Left ventricle myocardium inferior (tissue), 1 donor: ENCODE measurements at regions of chr1 and their contacts with region 1.

Region 1: GRCh38 chr1:112872551-112872962 is 83.4 kb downstream of the SLC16A1 start:
- DNase-seq: no peak
- H3K4me3 ChIP-seq: no peak overlapping the region
- H3K27ac ChIP-seq: no peak overlapping the region
- H3K4me1 ChIP-seq: no peaks in the 10 kb centered on the region
- H3K27me3 ChIP-seq: no peaks in the 10 kb centered on the region
- CTCF ChIP-seq: no peak

Region 2: DNA sequence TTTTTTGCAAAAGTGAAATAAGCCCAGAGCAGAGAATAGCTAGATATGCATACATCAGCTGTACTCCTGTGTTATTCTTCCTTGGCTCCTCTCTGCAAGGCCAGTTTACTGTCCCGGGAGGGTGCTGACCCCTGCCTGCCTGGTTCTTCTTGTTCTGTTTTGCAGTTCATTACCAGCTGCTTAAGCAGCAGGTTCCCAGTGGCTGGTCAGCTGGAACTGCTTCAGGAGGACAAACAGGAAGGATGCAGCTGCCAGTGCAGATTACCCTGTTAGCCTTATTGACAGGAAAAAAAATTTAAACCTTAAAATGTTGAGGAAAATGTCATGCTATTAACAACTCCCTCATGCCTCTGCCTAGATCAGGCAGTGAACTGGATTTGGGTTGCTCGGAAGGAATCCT is 184.4 kb after region 1 on chr1:
- intact Hi-C with region 1: loop called (anchors 5 kb)
- DNase-seq: no peak
- H3K4me3 ChIP-seq: no peak overlapping the region
- H3K27ac ChIP-seq: no peak overlapping the region
- H3K4me1 ChIP-seq: peaks cover 14% of the 10 kb centered on the region
- H3K27me3 ChIP-seq: no peaks in the 10 kb centered on the region
- CTCF ChIP-seq: no peak

Region 3: DNA sequence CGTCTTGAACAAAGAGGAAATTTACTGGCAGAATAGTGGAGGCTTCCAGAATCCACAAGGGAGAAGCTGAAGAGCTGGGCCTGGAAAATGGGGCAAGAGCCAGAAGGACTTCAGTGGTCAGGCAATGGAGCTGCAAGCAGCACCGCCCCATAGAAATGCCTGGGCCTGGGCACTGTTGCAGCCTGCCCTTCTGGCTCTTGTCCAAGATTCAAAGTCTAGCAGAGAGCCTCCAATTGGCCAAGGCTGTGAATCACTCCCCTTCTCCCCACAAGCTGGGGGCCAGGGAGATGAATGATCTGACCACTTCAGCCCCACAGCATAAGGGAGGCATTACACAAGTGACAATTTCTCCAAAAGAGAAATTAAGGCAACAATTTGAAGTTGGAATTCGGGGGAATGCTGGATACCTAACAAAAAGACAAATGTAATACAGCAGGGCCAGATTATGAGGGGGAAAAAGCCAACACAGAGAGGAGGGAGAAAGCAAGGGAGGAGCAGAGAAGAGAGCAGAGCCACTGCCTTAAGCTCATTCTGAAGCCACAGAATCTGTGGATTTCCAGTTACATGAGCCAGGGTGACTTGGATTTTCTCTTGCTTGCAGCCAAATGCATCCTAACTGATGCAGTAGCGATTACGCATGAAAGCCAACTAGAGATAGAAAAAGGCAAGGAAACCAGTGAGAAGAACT is 280.7 kb after region 1 on chr1:
- intact Hi-C with region 1: no loop called
- DNase-seq: no peak
- H3K4me3 ChIP-seq: no peak overlapping the region
- H3K27ac ChIP-seq: no peak overlapping the region
- H3K4me1 ChIP-seq: no peaks in the 10 kb centered on the region
- H3K27me3 ChIP-seq: no peaks in the 10 kb centered on the region
- CTCF ChIP-seq: no peak

Region 4: GRCh38 chr1:113405573-113405972 is 533.0 kb after region 1 on chr1:
- intact Hi-C with region 1: no loop called
- DNase-seq: no peak
- H3K4me3 ChIP-seq: no peak overlapping the region
- H3K27ac ChIP-seq: no peak overlapping the region
- H3K4me1 ChIP-seq: peaks cover 11% of the 10 kb centered on the region
- H3K27me3 ChIP-seq: no peaks in the 10 kb centered on the region
- CTCF ChIP-seq: no peak